IMR-90 (cell line): ENCODE measurements at regions of chr1 and their contacts with region 1.

Region 1: DNA sequence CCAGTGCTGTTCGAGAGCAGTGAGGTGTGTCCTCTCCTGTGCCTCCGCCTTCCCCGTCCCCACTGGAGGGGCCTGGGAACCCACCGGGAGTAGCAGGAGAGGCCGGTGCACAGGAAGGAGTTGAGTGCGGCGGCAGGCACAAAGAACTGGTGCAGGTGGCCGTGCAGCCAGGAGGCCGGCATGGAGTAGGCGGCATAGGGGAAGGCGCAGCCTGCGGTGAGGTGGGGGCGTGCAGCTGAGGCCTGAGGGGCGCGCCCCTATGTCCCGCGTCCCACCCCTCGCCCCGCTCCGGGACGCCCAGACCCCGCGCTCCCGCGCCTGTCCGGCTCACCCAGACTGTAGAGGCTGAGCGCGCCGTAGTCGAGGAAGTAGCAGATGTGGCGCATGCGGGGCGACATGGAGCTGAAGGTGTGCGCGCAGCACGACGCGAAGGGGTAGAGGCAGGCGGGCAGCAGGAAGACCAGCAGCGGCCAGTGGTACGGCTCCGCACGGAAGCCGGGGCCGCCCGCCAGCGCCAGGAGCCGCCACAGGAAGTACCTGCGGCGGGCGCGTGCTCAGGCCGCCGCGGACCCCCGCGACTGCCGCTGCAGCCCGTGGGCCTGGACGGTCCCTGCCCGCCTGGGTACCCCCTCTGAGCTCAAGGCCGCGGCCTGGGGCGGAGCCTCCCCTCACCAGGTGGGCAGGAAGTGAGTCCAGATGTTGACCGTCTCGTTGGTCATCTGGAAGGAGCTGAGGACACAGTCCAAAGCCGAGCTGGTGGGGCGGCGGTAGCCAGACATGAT is 2.2 kb downstream of the PAQR6 start:
- DNase-seq: no peak
- ATAC-seq: peak; percentile 40
- H3K4me3 ChIP-seq: peak overlapping the region; percentile 29
- H3K27ac ChIP-seq: no peak overlapping the region
- H3K4me1 ChIP-seq: peaks cover 2% of the 10 kb centered on the region; the same call in 1 of the 2 replicates
- H3K27me3 ChIP-seq: peaks cover 12% of the 10 kb centered on the region; the same call in 1 of the 2 replicates
- CTCF ChIP-seq: no peak
- POLR2A ChIP-seq: no peak
- RAD21 ChIP-seq: no peak

Region 2: DNA sequence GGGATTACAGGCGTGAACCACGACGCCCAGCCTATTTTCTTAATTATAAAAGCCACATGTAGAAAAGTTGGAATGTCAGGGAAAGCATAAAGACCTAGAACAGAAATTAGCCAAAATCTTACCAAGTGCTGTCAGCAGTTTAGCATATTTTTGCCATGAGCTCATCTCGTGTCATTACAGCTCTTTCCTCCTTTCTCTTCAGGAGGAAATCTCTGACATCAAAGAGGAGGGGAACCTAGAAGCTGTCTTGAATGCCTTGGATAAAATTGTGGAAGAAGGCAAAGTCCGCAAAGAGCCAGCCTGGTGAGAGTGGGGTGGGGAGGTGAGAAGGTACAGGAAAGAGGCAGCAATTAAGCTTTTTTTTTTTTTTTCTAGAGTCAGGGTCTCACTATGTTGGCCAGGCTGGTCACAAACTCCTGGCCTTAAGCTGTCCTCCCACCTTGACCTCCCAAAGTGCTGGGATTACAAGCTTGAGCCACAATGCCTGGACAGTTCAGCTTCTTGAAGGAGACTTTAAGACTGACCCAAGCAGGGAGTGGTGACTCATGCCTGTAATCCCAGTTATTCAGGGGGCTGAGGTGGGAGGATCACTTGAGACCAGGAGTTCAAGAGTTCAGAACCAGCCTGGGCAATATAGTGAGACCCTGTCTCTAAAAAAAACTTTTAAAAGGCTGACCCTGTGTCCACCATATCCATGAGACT is 12.1 kb before region 1 on chr1:
- CTCF ChIA-PET with region 1: no interaction called
- POLR2A ChIA-PET with region 1: interaction called, 15 read pairs
- dilution Hi-C with region 1: no loop called
- in situ Hi-C with region 1: no loop called
- intact Hi-C with region 1: no loop called
- DNase-seq: peak; percentile 88
- ATAC-seq: peak; percentile 88
- H3K4me3 ChIP-seq: no peak overlapping the region
- H3K27ac ChIP-seq: peak overlapping the region; percentile 76
- H3K4me1 ChIP-seq: peaks cover 13% of the 10 kb centered on the region
- H3K27me3 ChIP-seq: no peaks in the 10 kb centered on the region
- CTCF ChIP-seq: no peak
- POLR2A ChIP-seq: no peak
- RAD21 ChIP-seq: no peak

Region 3: DNA sequence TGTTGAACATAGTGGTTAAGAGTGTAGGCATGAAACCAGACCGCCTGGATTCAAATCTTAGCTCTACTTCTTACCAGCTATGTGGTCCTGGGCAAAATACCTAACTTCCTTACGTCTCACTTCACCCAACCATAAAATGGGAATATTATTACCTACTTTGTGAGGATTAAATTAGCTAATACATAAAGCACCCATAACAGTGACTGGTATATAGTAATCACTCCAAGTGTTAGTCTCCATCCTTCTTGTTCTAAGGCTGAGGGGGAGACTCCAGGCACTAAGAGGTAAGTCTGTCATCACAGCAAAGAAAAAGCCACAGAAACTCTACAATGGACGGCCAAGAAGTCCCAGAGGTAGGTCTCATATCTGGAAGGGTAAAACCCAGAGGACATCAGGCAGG is 34.2 kb after region 1 on chr1:
- CTCF ChIA-PET with region 1: no interaction called
- POLR2A ChIA-PET with region 1: interaction called, 4 read pairs
- dilution Hi-C with region 1: no loop called
- in situ Hi-C with region 1: no loop called
- intact Hi-C with region 1: loop called (anchors 1 kb)
- DNase-seq: no peak
- ATAC-seq: no peak
- H3K4me3 ChIP-seq: no peak overlapping the region
- H3K27ac ChIP-seq: no peak overlapping the region
- H3K4me1 ChIP-seq: peaks cover 11% of the 10 kb centered on the region
- H3K27me3 ChIP-seq: no peaks in the 10 kb centered on the region
- CTCF ChIP-seq: no peak
- POLR2A ChIP-seq: no peak
- RAD21 ChIP-seq: no peak